Calu3 (cell line): ENCODE measurements at regions of chr10 and their contacts with region 1.

Region 1: GRCh38 chr10:49512121-49512809 is 26.7 kb downstream of the ERCC6 start:
- DNase-seq: peak; percentile 10
- H3K4me3 Mint-ChIP-seq: no peak overlapping the region
- H3K27ac Mint-ChIP-seq: no peak overlapping the region
- H3K4me1 Mint-ChIP-seq: peaks cover 8% of the 10 kb centered on the region
- H3K27me3 Mint-ChIP-seq: no peaks in the 10 kb centered on the region
- CTCF ChIP-seq: peak; percentile 40

Region 2: GRCh38 chr10:48981310-48981907 is 530.9 kb before region 1 on chr10:
- CTCF ChIA-PET with region 1: no interaction called
- intact Hi-C with region 1: loop called (anchors 5 kb)
- DNase-seq: peak; percentile 69
- H3K4me3 Mint-ChIP-seq: no peak overlapping the region
- H3K27ac Mint-ChIP-seq: no peak overlapping the region
- H3K4me1 Mint-ChIP-seq: no peaks in the 10 kb centered on the region
- H3K27me3 Mint-ChIP-seq: peaks cover 69% of the 10 kb centered on the region
- CTCF ChIP-seq: peak; percentile 72

Region 3: GRCh38 chr10:49407552-49408137 is 104.6 kb before region 1 on chr10:
- CTCF ChIA-PET with region 1: interaction called, 47 read pairs
- intact Hi-C with region 1: loop called (anchors 1 kb)
- DNase-seq: peak; percentile 85
- H3K4me3 Mint-ChIP-seq: no peak overlapping the region
- H3K27ac Mint-ChIP-seq: no peak overlapping the region
- H3K4me1 Mint-ChIP-seq: no peaks in the 10 kb centered on the region
- H3K27me3 Mint-ChIP-seq: peaks cover 96% of the 10 kb centered on the region
- CTCF ChIP-seq: peak; percentile 87

Region 4: GRCh38 chr10:49488056-49488717 is 24.1 kb before region 1 on chr10:
- CTCF ChIA-PET with region 1: no interaction called
- intact Hi-C with region 1: no loop called
- DNase-seq: no peak
- H3K4me3 Mint-ChIP-seq: no peak overlapping the region
- H3K27ac Mint-ChIP-seq: no peak overlapping the region
- H3K4me1 Mint-ChIP-seq: no peaks in the 10 kb centered on the region
- H3K27me3 Mint-ChIP-seq: no peaks in the 10 kb centered on the region
- CTCF ChIP-seq: no peak